ENCODE measurements at regions of chr13 and their contacts with region 1.

Region 1: DNA sequence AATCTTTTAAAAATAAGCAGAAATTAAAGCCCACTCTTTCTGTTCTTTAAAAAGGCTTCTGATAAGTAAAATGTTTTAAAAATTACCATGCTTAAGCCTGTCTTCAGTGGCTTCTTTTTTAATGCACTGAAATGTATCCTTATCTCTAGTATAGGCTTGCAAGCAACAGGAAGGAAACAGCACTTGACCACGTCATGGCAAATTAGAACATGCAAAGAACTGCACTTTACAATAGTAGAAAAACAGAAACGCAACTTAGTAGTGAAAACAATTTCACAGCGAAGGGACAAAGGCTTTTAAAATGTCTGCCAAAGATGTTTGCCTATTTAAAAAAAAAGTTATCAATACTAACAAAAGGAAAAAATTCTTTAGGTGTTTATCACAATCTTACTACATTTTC is 36.3 kb downstream of the ELF1 start:
- DNase-seq: peak; percentile 53
- H3K4me3 Mint-ChIP-seq: peak overlapping the region; percentile 70
- H3K27ac Mint-ChIP-seq: peak overlapping the region; percentile 93
- H3K4me1 Mint-ChIP-seq: peaks cover 68% of the 10 kb centered on the region
- H3K27me3 Mint-ChIP-seq: no peaks in the 10 kb centered on the region

Region 2: GRCh38 chr13:40789275-40790133 is 193.3 kb before region 1 on chr13 and contains the start of gene SLC25A15:
- intact Hi-C with region 1: loop called (anchors 5 kb)
- DNase-seq: peak; percentile 62
- H3K4me3 Mint-ChIP-seq: peak within 1 kb of the TSS; percentile 73
- H3K27ac Mint-ChIP-seq: peak within 1 kb of the TSS; percentile 76
- H3K4me1 Mint-ChIP-seq: peaks cover 36% of the 10 kb centered on the region
- H3K27me3 Mint-ChIP-seq: no peaks in the 10 kb centered on the region
- total RNA-seq, gene SLC25A15: 21.8 and 24.1 TPM in 2 replicates

Region 3: DNA sequence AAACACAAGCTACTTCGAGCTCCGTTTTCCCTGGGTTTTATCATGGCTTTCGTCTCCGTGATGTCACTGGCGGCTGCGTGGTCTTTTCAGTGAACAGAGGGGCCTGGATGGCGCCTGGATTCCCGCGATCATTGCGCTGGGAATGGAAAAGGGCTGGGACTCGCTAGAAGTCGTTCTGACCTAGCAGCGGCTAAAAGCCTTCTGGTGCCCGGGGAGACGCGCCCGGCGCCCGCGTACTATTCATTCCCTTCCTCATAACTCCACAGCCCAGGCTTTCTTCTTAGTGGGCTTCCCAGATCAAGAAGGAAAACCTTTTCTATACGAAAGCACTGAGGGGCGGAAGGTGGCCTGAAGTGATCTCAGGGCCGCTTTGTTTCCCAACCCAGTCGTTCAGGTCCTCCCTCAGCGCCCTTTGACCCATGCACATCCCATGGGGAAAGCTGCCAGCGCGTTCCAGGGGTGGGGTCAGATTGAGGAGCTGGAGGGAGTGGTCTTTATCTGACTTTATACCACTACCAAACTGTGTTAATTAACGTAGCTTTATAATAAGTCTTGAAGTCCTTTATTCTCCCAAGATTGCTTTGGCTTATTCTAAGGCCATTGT is 60.2 kb before region 1 on chr13:
- intact Hi-C with region 1: loop called (anchors 5 kb)
- DNase-seq: no peak
- H3K4me3 Mint-ChIP-seq: peak overlapping the region; percentile 70
- H3K27ac Mint-ChIP-seq: peak overlapping the region; percentile 68
- H3K4me1 Mint-ChIP-seq: peaks cover 9% of the 10 kb centered on the region
- H3K27me3 Mint-ChIP-seq: no peaks in the 10 kb centered on the region

Region 4: DNA sequence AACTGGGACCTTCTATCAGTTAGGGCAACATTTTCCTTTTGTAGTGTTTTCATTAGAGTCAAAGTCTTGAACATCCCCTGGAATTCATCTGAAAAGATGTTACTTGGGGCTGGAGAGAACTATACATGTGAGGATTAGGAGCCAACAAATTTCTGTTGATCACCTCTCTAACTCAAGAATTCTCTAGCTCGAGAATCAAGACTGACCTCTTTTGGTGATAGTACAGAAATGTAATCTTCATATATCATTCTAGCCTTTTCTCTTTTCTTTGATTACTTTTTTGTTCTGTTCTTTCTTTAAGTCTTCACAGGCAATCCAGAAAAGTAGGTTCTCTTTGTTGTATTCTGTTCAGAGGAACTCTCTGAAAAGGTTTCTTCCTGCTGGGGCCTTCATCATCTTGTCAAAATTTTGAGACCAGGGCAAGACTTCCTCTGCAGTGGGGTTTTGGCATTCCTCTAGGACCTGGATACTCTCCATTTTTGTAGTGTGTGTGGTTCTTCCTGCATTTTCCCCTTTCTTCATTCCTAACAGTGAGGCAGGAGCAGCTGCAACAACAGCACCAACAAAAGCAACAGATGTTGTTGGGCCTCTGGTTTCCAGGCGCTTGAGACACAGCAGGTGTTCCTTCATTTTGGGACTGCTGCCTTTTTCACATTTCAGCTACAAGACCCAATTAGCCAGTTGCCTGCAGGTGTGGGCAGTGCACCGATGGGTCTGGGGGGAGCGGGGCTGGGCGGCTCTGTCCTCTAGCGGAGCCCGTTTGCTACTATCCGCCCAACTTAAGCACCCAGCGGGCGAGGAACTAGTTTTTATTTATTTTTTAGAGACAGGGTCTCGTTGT is 10.1 kb after region 1 on chr13:
- intact Hi-C with region 1: loop called (anchors 2 kb)
- DNase-seq: no peak
- H3K4me3 Mint-ChIP-seq: no peak overlapping the region
- H3K27ac Mint-ChIP-seq: peak overlapping the region; percentile 68
- H3K4me1 Mint-ChIP-seq: peaks cover 64% of the 10 kb centered on the region
- H3K27me3 Mint-ChIP-seq: no peaks in the 10 kb centered on the region

Region 5: GRCh38 chr13:41019011-41019487 is 36.3 kb after region 1 on chr13 and contains the start of gene ELF1:
- intact Hi-C with region 1: loop called (anchors 1 kb)
- DNase-seq: peak; percentile 51
- H3K4me3 Mint-ChIP-seq: peak within 1 kb of the TSS; percentile 91
- H3K27ac Mint-ChIP-seq: peak within 1 kb of the TSS; percentile 97
- H3K4me1 Mint-ChIP-seq: peaks cover 38% of the 10 kb centered on the region
- H3K27me3 Mint-ChIP-seq: no peaks in the 10 kb centered on the region
- total RNA-seq, gene ELF1: 65.3 and 68.1 TPM in 2 replicates

Measured in activated T-helper 2 cell treated with anti-CD3 and anti-CD28 coated beads, Interferon-gamma antibody, Interleukin-2, Interleukin-4, amounts not matched to agents 10 μg/mL and 5 μg/mL and 100 μg/mL, durations not matched to agents 14 hours and 24 hours and 36 hours (primary cell).